ENCODE measurements at regions of chr11 and their contacts with region 1.

Region 1: GRCh38 chr11:66545701-66546367 is at the start of gene ZDHHC24:
- DNase-seq: peak; percentile 96
- H3K4me3 Mint-ChIP-seq: peak within 1 kb of the TSS; percentile 80
- H3K27ac Mint-ChIP-seq: peak within 1 kb of the TSS; percentile 74
- H3K4me1 Mint-ChIP-seq: peaks cover 14% of the 10 kb centered on the region
- H3K27me3 Mint-ChIP-seq: no peaks in the 10 kb centered on the region
- total RNA-seq, gene ZDHHC24: 13.5 to 14.9 TPM

Region 2: GRCh38 chr11:66616379-66617154 is 70.7 kb after region 1 on chr11 and contains the start of gene RBM14:
- CTCF ChIA-PET with region 1: no interaction called
- POLR2A ChIA-PET with region 1: interaction called, 11 read pairs
- intact Hi-C with region 1: loop called (anchors 1 kb)
- DNase-seq: peak; percentile 99
- H3K4me3 Mint-ChIP-seq: peak within 1 kb of the TSS; percentile 91
- H3K27ac Mint-ChIP-seq: peak within 1 kb of the TSS; percentile 94
- H3K4me1 Mint-ChIP-seq: peaks cover 36% of the 10 kb centered on the region
- H3K27me3 Mint-ChIP-seq: no peaks in the 10 kb centered on the region
- total RNA-seq, gene RBM14: 114 to 121 TPM

Measured in activated CD4-positive, alpha-beta memory T cell treated with anti-CD3 and anti-CD28 coated beads for 36 hours (primary cell).